B cell (primary cell): ENCODE measurements at regions of chr7 and their contacts with region 1.

Region 1: GRCh38 chr7:104943502-104944343 is 70.3 kb upstream of the KMT2E start:
- DNase-seq: peak; percentile 73
- ATAC-seq: peak; percentile 18
- H3K4me3 ChIP-seq: peak overlapping the region; percentile 68 to 83 (median 76)
- H3K4me3 Mint-ChIP-seq: peak overlapping the region; percentile 93
- H3K27ac ChIP-seq: peak overlapping the region; percentile 99
- H3K27ac Mint-ChIP-seq: peak overlapping the region; percentile 100
- H3K4me1 ChIP-seq: peaks cover 66 to 78% of the 10 kb centered on the region in 2 donors
- H3K4me1 Mint-ChIP-seq: peaks cover 70% of the 10 kb centered on the region
- H3K27me3 ChIP-seq: no peaks in the 10 kb centered on the region
- H3K27me3 Mint-ChIP-seq: no peaks in the 10 kb centered on the region
- CTCF ChIP-seq: no peak

Region 2: DNA sequence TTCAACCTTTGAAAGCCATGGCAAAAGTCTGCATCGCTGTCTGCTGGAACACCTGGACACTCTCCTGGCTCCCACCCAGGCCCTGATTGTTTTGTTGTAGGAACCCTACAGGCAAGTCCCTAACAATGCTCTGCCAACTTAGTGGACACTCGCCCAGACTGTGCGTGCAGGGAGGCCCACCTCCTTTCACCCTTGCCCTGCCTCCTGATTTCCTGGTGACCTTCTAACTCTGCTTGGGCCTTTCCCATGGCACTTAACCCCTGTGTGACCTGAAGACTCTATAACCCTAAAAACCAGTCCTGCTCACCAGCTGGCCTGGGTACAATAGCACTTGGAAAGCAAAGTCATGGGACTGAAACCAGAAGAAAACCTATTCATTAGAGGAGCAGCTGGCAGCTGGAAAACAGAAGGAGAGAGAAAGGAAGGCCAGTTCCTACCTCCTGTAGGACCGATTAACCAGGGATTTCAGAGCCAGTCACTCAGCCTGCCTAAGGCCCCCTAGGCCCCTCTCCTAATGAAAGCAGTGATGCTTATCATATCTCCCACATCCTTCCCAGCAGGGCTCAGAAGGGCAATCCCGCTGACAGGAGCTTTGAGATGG is 12.4 kb before region 1 on chr7:
- CTCF ChIA-PET with region 1: interaction called, 5 read pairs
- POLR2A ChIA-PET with region 1: interaction called, 38 read pairs
- intact Hi-C with region 1: loop called (anchors 1 kb)
- DNase-seq: no peak
- ATAC-seq: no peak
- H3K4me3 ChIP-seq: no peak overlapping the region
- H3K4me3 Mint-ChIP-seq: peak overlapping the region; percentile 48
- H3K27ac ChIP-seq: peak overlapping the region; percentile 73 to 75
- H3K27ac Mint-ChIP-seq: peak overlapping the region; percentile 81
- H3K4me1 ChIP-seq: peaks cover 39 to 48% of the 10 kb centered on the region in 2 donors
- H3K4me1 Mint-ChIP-seq: peaks cover 56% of the 10 kb centered on the region
- H3K27me3 ChIP-seq: no peaks in the 10 kb centered on the region
- H3K27me3 Mint-ChIP-seq: no peaks in the 10 kb centered on the region
- CTCF ChIP-seq: no peak

Region 3: GRCh38 chr7:104956753-104957450 is 13.2 kb after region 1 on chr7:
- CTCF ChIA-PET with region 1: interaction called, 5 read pairs
- POLR2A ChIA-PET with region 1: interaction called, 5 read pairs
- intact Hi-C with region 1: loop called (anchors 2 kb)
- DNase-seq: no peak
- ATAC-seq: no peak
- H3K4me3 ChIP-seq: no peak overlapping the region
- H3K4me3 Mint-ChIP-seq: peak overlapping the region; percentile 18
- H3K27ac ChIP-seq: peak overlapping the region; percentile 33 to 71
- H3K27ac Mint-ChIP-seq: peak overlapping the region; percentile 70
- H3K4me1 ChIP-seq: peaks cover 26 to 27% of the 10 kb centered on the region in 2 donors
- H3K4me1 Mint-ChIP-seq: peaks cover 44% of the 10 kb centered on the region
- H3K27me3 ChIP-seq: no peaks in the 10 kb centered on the region
- H3K27me3 Mint-ChIP-seq: no peaks in the 10 kb centered on the region
- CTCF ChIP-seq: no peak

Region 4: DNA sequence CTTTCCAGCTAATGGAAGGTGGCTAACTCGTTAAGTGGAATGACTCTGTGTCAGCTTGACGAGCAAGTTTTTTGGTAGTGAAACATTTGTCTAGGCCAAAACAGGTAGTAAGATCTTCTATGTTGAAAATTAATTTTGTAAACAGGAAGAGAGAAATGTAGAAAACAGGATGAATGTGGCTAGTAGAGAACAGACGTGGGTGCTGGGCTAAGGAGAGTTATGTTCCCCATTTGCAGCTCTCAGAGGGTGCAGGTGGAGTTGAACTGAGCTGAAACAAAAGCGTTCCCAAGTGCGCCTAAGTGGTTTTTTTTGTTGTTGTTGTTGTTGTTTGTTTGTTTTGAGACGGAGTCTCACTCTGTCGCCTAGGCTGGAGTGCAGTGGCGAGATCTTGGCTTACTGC is 504.5 kb after region 1 on chr7:
- CTCF ChIA-PET with region 1: no interaction called
- POLR2A ChIA-PET with region 1: no interaction called
- intact Hi-C with region 1: loop called (anchors 10 kb)
- DNase-seq: peak; percentile 62
- ATAC-seq: peak; percentile 79
- H3K4me3 ChIP-seq: peak overlapping the region in 1 of 5 experiments; percentile 32
- H3K4me3 Mint-ChIP-seq: peak overlapping the region; percentile 78
- H3K27ac ChIP-seq: peak overlapping the region; percentile 59 to 81
- H3K27ac Mint-ChIP-seq: peak overlapping the region; percentile 94
- H3K4me1 ChIP-seq: peaks cover 56 to 70% of the 10 kb centered on the region in 2 donors
- H3K4me1 Mint-ChIP-seq: peaks cover 67% of the 10 kb centered on the region
- H3K27me3 ChIP-seq: no peaks in the 10 kb centered on the region
- H3K27me3 Mint-ChIP-seq: no peaks in the 10 kb centered on the region
- CTCF ChIP-seq: no peak

Region 5: DNA sequence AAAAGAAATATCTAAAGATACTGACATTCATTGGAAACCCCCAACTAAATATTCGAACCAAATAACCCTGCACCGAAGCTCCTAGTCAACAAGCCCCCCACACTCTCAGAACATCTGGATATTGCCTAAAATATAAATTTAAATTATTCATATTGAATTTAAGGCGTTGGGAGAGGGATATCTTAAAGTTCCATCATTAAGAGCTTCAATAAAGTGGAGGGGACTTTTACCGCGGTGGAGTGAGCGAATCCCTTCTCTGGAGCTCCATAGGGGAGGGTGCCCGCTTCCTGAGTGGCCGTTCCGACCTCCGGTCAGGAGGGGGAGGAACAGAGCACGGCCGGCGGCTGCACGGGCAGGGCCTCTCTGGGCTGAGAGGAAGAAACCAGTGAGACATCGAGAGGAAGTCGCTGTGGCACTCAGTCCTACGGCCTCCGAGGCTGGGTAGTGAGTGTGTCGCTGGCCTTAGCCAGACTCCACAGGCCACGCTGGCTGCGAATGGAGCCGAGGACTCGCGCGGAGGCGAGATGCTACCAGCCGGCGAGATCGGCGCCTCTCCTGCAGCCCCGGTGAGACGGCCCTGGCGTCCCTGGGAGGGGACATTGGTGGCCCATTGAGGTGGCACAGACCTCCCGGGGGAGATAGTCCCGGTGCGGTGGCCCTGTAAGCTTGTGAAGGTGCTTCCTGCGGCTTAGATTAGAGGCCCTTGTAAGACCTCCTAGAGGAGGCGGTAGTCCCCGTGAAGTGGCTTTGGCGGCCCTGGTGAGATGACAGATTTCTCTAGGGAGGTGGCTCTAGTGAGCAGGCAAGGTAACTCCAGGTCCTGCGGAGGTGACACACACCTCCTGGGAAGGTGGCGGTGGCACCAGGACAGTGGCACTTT is 588.3 kb after region 1 on chr7 and contains the start of gene RINT1:
- CTCF ChIA-PET with region 1: no interaction called
- POLR2A ChIA-PET with region 1: no interaction called
- intact Hi-C with region 1: loop called (anchors 1 kb)
- DNase-seq: peak; percentile 95
- ATAC-seq: peak; percentile 97
- H3K4me3 ChIP-seq: peak within 1 kb of the TSS; percentile 81 to 98 (median 88)
- H3K4me3 Mint-ChIP-seq: peak within 1 kb of the TSS; percentile 92
- H3K27ac ChIP-seq: peak within 1 kb of the TSS; percentile 74 to 91
- H3K27ac Mint-ChIP-seq: peak within 1 kb of the TSS; percentile 97
- H3K4me1 ChIP-seq: peaks cover 18 to 22% of the 10 kb centered on the region in 2 donors
- H3K4me1 Mint-ChIP-seq: peaks cover 24% of the 10 kb centered on the region
- H3K27me3 ChIP-seq: no peaks in the 10 kb centered on the region
- H3K27me3 Mint-ChIP-seq: no peaks in the 10 kb centered on the region
- CTCF ChIP-seq: peak; percentile 84
- total RNA-seq, gene RINT1: 27.2 and 28.0 TPM in 2 replicates

Region 6: DNA sequence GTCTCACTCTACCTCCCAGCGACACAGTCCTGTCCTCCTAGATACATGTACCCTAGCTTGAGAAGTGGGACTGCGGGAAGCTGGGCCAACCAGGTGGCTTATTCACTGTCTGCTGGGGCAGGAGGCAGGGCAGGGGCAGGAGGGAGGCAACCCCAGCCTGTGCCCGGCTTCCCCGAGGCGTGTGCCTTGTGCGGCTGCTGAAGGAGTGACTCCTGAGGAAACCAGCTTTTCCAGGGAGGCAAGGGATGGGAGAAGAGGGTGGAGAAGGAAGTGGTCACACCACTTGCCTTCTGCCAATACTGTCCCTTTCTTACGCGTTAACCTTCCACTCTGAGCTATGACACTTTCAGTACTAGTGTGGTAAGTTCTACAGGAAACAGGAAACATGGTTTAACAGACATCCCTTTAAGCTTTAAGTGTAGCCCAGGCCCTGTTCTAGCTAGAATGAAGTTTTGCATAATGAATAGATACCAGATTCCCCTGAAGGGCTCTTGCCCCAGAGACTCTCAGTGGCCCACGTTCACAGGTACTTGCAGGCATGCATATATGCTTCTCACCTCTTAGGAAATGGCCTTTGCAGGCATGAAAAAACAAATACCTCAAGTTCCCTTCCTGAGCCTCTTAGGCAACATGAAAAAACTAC is 1127.8 kb after region 1 on chr7:
- CTCF ChIA-PET with region 1: no interaction called
- POLR2A ChIA-PET with region 1: no interaction called
- intact Hi-C with region 1: loop called (anchors 10 kb)
- DNase-seq: peak; percentile 90
- ATAC-seq: peak; percentile 87
- H3K4me3 ChIP-seq: peak overlapping the region in 4 of 5 experiments; percentile 33 to 66 (median 45)
- H3K4me3 Mint-ChIP-seq: peak overlapping the region; percentile 85
- H3K27ac ChIP-seq: peak overlapping the region; percentile 95 to 97
- H3K27ac Mint-ChIP-seq: peak overlapping the region; percentile 99
- H3K4me1 ChIP-seq: peaks cover 96 to 100% of the 10 kb centered on the region in 2 donors
- H3K4me1 Mint-ChIP-seq: peaks cover 94% of the 10 kb centered on the region
- H3K27me3 ChIP-seq: no peaks in the 10 kb centered on the region
- H3K27me3 Mint-ChIP-seq: no peaks in the 10 kb centered on the region
- CTCF ChIP-seq: no peak

Region 7: DNA sequence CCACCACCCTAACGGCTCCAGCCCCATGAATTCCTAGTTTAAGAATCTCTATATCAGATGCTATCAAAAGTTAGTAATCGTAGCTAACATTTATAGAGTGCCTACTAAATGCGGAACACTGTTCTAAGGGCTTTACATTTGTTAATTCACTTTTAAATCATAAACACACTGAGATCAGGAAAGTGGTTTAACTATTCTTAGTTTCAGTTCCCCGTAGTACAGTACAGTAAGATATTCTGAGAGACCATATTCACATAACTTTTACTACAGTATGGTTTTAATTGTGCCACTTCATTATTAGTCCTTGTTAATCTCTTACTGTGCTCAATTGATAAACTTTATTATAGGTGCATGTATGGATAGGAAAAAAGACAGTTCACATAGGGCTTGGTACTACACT is 1145.9 kb after region 1 on chr7:
- CTCF ChIA-PET with region 1: no interaction called
- POLR2A ChIA-PET with region 1: interaction called, 12 read pairs
- intact Hi-C with region 1: no loop called
- DNase-seq: peak; percentile 53
- ATAC-seq: peak; percentile 87
- H3K4me3 ChIP-seq: peak overlapping the region in 1 of 5 experiments; percentile 28
- H3K4me3 Mint-ChIP-seq: peak overlapping the region; percentile 72
- H3K27ac ChIP-seq: peak overlapping the region; percentile 63 to 77
- H3K27ac Mint-ChIP-seq: peak overlapping the region; percentile 92
- H3K4me1 ChIP-seq: peaks cover 37 to 69% of the 10 kb centered on the region in 2 donors
- H3K4me1 Mint-ChIP-seq: peaks cover 77% of the 10 kb centered on the region
- H3K27me3 ChIP-seq: no peaks in the 10 kb centered on the region
- H3K27me3 Mint-ChIP-seq: no peaks in the 10 kb centered on the region
- CTCF ChIP-seq: no peak